Right cardiac atrium (tissue), 5 donors: ENCODE measurements at regions of chr9 and their contacts with region 1.

Region 1: DNA sequence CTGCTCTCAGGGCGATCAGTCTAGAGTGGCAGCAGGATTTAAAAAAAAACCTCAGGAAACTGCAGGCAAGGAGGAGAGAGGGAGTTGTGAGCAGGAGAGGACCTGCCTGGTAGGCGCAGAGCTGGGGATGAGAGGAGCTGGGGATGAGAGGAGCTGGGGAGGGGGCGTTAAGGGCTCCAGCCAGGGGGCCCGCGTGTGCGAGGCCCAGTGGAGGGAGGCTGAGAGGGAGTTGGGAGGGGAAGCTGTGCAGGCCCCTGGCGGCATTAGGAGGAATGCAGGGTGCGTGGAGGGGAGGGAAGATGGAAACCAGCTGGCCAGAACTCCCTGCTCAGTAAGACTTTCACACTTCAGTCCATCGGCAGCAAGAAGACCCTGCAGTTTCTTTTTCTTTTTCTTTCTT is 45.2 kb upstream of the HMCN2 start:
- DNase-seq: peak in 2 of 3 donors; percentile 53 to 70
- ATAC-seq: peak; percentile 54 to 65
- H3K4me3 ChIP-seq: no peak overlapping the region
- H3K27ac ChIP-seq: no peak overlapping the region
- H3K4me1 ChIP-seq: no peaks in the 10 kb centered on the region
- H3K27me3 ChIP-seq: no peaks in the 10 kb centered on the region

Region 2: GRCh38 chr9:130107234-130107861 is 113.0 kb before region 1 on chr9:
- intact Hi-C with region 1: no loop called
- DNase-seq: peak; percentile 86 to 95 (median 88)
- ATAC-seq: peak; percentile 58 to 77
- H3K4me3 ChIP-seq: no peak overlapping the region
- H3K27ac ChIP-seq: no peak overlapping the region
- H3K4me1 ChIP-seq: peaks cover 3% of the 10 kb centered on the region
- H3K27me3 ChIP-seq: no peaks in the 10 kb centered on the region

Region 3: DNA sequence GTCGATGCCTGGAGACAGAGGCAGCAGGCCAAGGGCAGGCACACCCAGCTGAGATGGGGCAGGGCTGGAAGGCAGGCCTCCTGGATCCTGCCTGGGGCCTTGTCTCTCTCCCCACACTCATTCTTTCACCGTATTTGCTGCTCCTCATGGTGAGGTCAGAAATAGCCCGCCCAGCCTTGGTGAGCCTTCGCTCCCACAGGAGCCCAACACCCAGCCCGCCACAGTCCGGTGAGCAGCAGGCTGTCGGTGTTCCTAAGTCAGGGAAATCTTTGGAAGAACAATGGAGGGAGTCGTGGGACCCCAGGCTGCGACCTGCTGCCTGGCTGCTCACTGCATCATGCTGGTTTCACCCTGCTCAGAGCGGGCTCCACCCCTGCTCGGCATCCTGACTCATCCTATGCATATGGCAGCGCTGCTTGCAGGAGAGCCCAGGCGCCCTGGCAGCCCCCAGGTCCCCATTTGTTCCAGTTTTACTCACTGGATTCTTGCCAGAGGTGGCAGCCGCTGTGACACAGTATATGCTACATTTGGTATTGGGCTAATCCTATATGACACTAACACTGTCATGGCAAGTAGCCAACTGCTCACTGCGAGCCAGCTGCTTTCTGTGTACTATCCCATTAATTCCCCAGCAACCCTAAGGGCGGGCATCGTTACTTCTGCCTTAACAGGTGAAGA is 101.4 kb before region 1 on chr9:
- intact Hi-C with region 1: loop called in 1 of 4 experiments (anchors 5 kb)
- DNase-seq: no peak
- ATAC-seq: no peak
- H3K4me3 ChIP-seq: no peak overlapping the region
- H3K27ac ChIP-seq: no peak overlapping the region
- H3K4me1 ChIP-seq: peaks cover 4% of the 10 kb centered on the region
- H3K27me3 ChIP-seq: no peaks in the 10 kb centered on the region

Region 4: GRCh38 chr9:130193531-130194377 is 26.6 kb before region 1 on chr9:
- intact Hi-C with region 1: loop called in 1 of 4 experiments (anchors 2 kb)
- DNase-seq: peak in 1 of 3 donors; percentile 51
- ATAC-seq: peak in 1 of 2 donors; percentile 7
- H3K4me3 ChIP-seq: no peak overlapping the region
- H3K27ac ChIP-seq: no peak overlapping the region
- H3K4me1 ChIP-seq: peaks cover 5% of the 10 kb centered on the region
- H3K27me3 ChIP-seq: no peaks in the 10 kb centered on the region

Region 5: DNA sequence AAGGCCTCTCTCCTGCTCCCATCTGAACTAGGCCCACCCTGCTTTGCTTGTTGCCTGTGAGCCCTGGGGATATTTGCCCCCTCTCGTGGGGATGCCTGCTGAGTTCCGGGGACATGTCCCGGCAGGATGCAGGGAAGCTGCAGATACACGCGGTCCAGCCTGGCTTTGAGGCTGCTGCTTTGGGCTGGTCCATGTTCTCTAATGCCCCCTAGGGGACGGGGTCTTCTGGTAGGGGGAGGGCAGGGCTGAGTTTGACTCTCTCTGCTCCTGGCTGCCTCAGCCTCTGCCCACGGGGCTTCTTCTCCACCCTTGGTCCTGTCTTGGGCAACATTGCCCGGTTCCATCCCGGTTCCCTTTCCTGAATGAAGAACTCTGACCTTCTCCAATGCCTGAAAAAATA is 139.5 kb after region 1 on chr9:
- intact Hi-C with region 1: no loop called
- DNase-seq: no peak
- ATAC-seq: no peak
- H3K4me3 ChIP-seq: no peak overlapping the region
- H3K27ac ChIP-seq: no peak overlapping the region
- H3K4me1 ChIP-seq: no peaks in the 10 kb centered on the region
- H3K27me3 ChIP-seq: no peaks in the 10 kb centered on the region